Prostate gland (tissue), 2 donors: ENCODE measurements at regions of chr11 and their contacts with region 1.

Region 1: DNA sequence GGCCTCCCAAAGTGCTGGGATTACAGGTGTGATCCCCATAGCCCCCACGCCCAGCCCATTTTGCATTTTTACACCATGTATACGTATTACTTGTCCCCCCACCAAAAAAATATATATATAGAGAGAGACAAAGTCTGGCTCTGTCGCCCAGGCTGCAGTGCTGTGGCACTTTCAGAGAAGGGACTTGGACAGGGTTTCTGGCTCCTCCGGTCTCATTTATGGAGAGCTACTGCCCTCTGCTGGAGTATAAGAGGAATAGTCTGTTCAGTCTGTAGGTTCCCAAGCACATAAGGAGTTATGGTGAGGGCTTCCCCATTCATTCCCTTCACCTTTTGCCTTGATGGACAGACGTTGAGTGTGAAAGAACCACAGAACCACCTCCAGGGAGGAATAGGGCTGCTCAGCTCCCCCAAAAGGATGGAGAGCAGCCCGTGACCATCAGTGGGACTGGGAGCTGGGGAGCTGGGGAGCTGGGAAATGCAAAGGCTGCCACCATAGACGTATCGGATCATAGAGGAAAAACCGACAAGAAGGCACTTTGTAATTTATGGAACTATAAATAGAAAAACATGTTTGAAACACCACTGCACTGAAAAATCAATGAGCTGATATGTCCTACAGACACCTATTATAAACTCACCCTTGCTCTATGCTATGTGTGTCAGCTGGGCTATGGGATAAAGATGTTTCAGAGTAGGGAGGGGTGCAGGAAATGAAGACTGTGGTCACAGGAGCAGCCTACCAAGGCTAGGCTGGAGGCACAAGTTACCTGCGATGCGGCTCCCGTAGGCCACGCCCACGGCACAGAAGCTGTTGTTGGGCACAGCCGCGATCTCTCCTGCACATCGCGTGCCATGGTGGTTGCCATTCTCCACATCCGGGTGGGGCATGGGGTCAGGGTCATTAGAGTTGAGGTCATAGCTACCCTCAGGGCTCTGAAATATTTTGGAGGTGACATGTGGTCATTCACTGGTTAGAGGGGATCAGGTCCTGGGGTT is 5.2 kb downstream of the PCSK7 start:
- DNase-seq: peak; percentile 57
- H3K4me3 ChIP-seq: no peak overlapping the region
- H3K27ac ChIP-seq: no peak overlapping the region
- H3K4me1 ChIP-seq: peaks cover 1% of the 10 kb centered on the region
- H3K27me3 ChIP-seq: no peaks in the 10 kb centered on the region
- CTCF ChIP-seq: peak in 3 of 4 experiments; percentile 81 to 90 (median 88)
- POLR2A ChIP-seq: no peak

Region 2: DNA sequence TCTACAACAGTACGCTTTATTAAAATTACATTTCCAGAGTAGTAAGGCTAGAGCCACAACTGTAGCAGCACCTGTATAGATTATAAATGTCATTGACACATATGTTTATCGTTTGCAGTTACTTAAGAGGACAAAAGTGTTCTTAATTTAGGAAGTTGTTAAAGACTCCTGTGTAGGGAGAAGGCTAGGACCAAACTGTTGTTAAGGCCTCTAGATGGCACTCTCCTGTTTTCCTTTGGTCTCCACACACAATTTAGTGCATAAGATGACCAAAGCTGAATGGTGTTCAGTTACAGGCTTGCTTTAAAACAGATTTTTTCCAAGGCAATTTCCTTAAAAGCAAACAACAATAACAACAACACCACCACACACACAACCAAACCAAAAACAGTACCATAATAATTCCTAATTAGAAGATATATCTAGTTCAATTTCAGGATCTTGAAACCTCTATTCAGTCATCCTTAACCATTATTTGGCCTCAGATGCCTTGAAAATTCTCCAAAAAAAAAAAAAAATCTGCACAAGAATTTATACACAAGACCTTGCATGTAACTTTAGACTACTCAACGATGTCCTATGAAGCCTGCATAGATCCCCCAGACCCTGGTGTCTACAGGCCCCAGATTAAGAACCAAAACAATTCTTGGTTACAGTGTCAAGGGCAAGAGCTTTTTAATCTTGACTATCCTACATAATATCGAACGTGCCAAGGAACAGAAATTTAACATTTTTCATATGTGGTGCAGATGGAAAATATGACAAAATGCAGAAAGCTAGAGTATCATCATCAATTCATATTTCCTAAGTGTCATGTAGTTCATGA is 346.7 kb before region 1 on chr11:
- intact Hi-C with region 1: loop called (anchors 5 kb)
- DNase-seq: peak; percentile 26
- H3K4me3 ChIP-seq: no peak overlapping the region
- H3K27ac ChIP-seq: no peak overlapping the region
- H3K4me1 ChIP-seq: no peaks in the 10 kb centered on the region
- H3K27me3 ChIP-seq: no peaks in the 10 kb centered on the region
- CTCF ChIP-seq: peak in 3 of 4 experiments; percentile 57 to 67 (median 62)
- POLR2A ChIP-seq: no peak

Region 3: DNA sequence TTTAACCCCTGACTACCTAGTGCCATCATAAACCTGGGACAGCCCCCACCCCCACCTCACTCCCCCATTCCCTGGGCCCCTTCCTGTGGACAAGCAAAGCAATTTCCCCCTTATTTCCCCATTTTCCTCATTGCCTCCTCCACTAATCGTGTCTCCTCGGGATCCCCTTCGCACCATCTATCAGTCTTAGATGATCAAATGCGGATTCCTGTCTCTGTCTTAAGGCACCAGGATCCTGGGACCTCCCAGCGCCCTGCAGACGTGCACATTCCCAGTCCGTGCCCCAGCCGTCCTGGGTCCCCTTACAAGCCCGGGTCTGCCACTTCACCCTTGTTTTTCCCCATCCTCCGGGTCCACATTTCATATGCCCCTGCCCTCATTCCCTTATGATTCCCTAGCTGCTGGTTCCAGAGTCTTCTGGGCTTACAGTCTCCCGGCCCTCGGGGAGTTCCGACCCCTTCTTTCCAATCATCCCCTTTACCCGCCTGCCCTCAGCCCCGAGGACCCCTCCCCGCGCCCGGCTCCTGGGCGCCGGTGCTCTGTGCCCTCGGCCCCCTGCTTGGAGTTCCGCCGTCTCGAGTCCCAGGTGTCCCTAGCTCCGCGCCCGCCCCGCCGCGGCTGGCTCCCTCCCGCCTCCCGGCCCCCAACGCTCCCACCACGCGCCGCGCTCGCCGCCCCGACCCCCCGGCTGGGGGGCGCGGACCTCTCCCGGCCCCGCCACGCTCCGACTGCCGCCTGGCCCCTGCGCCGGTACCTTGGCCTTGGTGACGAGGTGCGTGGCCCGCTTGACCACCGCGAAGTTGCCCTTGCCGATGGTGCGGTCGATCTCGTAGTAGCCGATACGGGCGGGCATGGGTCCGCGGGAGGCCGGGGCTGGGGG is 129.1 kb before region 1 on chr11:
- intact Hi-C with region 1: loop called (anchors 5 kb)
- DNase-seq: peak; percentile 28
- H3K4me3 ChIP-seq: peak overlapping the region; percentile 88 to 97
- H3K27ac ChIP-seq: peak overlapping the region; percentile 91 to 96
- H3K4me1 ChIP-seq: no peaks in the 10 kb centered on the region
- H3K27me3 ChIP-seq: no peaks in the 10 kb centered on the region
- CTCF ChIP-seq: no peak
- POLR2A ChIP-seq: no peak

Region 4: DNA sequence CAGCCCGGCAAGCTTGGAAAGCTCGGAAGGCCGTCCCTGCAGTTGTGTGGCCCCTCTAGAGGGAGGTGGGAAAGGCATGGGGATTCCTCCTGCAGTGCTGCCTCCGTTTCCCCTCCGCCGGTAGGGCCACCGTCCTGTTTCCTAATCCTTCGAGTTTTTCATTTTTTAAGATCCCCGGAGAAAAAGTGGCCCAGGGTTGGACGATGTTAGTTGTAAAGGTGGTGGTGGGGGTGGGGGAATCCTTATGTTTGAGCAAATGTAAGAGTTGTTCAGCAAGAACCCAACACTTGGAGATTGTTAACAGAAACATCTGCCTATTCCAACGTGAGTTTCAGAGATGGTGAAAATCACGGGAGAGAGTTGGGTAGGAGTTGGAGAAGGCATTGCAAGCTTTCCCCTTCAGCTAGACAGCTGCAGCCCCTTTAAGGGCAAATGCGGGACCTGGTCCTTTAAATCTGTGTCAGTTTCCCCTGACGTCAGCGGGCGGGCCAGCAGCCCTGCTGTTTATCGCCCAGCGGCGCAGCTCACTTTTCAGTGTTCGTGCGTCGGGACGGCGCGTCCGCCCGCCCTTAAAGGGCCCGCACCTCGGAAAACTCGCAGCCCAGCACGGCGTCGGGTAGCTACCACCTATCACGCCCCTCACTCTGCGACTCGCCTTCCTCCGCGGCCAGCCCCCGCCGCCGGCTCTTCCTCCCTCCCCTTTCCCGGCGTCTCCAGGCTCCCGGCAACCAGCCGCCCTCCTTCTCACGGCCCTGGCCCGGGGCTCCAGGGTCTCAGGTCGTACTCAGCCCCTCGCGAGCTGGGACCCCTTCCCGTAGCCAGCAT is 48.3 kb before region 1 on chr11 and contains the start of gene SIDT2:
- intact Hi-C with region 1: loop called (anchors 2 kb)
- DNase-seq: peak; percentile 94
- H3K4me3 ChIP-seq: peak within 1 kb of the TSS; percentile 96 to 99
- H3K27ac ChIP-seq: peak within 1 kb of the TSS; percentile 98 to 99
- H3K4me1 ChIP-seq: peaks cover 15% of the 10 kb centered on the region
- H3K27me3 ChIP-seq: no peaks in the 10 kb centered on the region
- CTCF ChIP-seq: peak in 1 of 4 experiments; percentile 19
- POLR2A ChIP-seq: peak; percentile 97
- total RNA-seq, gene SIDT2: 69.5 to 144 TPM

Region 5: DNA sequence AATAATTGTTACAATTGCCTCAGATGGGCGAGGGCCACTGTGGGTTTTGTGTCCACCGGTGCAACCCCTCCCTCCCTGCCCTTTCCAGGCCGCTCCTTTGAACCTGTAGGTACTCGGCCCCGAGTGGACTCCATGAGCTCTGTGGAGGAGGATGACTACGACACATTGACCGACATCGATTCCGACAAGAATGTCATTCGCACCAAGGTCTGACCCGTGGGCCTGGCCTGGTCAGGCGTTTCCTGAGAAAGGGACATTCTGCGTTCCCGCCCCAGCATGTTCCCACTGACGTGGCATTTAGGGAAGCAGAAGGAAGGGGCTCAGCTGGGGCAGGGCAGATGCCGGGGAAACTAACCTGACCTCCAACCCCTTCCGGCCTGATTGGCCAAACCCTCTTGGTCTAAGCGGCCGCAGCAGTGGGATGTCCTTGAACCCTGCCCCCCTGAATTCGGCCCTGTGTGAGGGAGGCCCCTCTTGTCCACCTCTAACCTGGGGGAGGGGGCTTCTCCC is 38.0 kb before region 1 on chr11:
- intact Hi-C with region 1: no loop called
- DNase-seq: no peak
- H3K4me3 ChIP-seq: no peak overlapping the region
- H3K27ac ChIP-seq: no peak overlapping the region
- H3K4me1 ChIP-seq: peaks cover 5% of the 10 kb centered on the region
- H3K27me3 ChIP-seq: no peaks in the 10 kb centered on the region
- CTCF ChIP-seq: no peak
- POLR2A ChIP-seq: no peak

Region 6: DNA sequence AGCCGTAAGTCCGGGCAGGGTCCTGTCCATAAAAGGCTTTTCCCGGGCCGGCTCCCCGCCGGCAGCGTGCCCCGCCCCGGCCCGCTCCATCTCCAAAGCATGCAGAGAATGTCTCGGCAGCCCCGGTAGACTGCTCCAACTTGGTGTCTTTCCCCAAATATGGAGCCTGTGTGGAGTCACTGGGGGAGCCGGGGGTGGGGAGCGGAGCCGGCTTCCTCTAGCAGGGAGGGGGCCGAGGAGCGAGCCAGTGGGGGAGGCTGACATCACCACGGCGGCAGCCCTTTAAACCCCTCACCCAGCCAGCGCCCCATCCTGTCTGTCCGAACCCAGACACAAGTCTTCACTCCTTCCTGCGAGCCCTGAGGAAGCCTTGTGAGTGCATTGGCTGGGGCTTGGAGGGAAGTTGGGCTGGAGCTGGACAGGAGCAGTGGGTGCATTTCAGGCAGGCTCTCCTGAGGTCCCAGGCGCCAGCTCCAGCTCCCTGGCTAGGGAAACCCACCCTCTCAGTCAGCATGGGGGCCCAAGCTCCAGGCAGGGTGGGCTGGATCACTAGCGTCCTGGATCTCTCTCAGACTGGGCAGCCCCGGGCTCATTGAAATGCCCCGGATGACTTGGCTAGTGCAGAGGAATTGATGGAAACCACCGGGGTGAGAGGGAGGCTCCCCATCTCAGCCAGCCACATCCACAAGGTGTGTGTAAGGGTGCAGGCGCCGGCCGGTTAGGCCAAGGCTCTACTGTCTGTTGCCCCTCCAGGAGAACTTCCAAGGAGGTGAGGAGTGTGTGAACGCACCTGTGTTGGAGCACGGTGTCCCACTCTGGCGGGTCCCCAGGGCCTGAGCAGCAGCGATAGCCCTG is 27.4 kb before region 1 on chr11 and contains the start of gene TAGLN:
- intact Hi-C with region 1: loop called (anchors 2 kb)
- DNase-seq: peak; percentile 49
- H3K4me3 ChIP-seq: peak within 1 kb of the TSS; percentile 34 to 36
- H3K27ac ChIP-seq: peak within 1 kb of the TSS; percentile 82 to 83
- H3K4me1 ChIP-seq: peaks cover 10% of the 10 kb centered on the region
- H3K27me3 ChIP-seq: no peaks in the 10 kb centered on the region
- CTCF ChIP-seq: no peak
- POLR2A ChIP-seq: no peak
- total RNA-seq, gene TAGLN: 2,153 to 2,440 TPM